MCF 10A (cell line): ENCODE measurements at regions of chr1 and their contacts with region 1.

Region 1: DNA sequence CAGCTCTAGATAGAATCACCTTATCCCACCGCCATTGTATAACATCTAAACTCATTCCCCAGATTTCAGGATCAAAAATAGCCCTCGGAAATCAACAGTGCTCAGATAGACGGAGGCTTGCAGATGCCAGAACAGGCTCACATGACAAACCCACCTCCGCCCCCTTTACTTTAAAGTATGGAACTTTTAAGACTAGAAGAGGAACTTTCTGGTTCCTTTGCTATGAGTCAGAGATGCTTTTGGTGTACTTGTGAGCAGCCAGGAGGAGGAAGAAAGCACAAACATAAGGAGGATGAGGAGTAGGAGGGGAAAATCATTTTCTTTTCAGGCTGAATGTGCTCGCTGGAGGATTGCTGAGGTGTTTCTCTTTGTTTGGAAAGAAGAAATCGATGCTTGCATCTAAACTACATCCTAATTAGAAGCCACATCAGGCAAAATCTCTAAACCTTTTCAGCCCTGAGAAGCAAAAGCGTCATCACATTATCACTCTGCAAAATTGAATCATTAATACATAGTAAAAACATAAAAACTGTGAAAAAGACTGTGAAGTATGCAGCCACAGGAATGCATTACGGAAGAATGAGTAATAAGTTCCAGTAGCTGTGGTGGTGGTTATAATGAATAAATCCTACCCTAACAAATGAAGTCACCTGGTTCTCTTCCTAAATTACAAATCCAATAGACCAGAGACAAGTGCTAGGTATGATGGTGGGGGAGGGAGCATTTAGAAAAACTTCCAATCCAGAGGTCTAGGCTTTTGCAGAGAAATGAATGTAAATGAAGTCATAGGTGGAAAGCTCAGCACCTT is 251.3 kb downstream of the KCNH1 start:
- DNase-seq: peak; percentile 87
- H3K4me3 Mint-ChIP-seq: peak overlapping the region; percentile 57
- H3K27ac Mint-ChIP-seq: peak overlapping the region; percentile 46
- H3K4me1 Mint-ChIP-seq: peaks cover 31% of the 10 kb centered on the region
- H3K27me3 Mint-ChIP-seq: no peaks in the 10 kb centered on the region
- CTCF ChIP-seq: no peak

Region 2: DNA sequence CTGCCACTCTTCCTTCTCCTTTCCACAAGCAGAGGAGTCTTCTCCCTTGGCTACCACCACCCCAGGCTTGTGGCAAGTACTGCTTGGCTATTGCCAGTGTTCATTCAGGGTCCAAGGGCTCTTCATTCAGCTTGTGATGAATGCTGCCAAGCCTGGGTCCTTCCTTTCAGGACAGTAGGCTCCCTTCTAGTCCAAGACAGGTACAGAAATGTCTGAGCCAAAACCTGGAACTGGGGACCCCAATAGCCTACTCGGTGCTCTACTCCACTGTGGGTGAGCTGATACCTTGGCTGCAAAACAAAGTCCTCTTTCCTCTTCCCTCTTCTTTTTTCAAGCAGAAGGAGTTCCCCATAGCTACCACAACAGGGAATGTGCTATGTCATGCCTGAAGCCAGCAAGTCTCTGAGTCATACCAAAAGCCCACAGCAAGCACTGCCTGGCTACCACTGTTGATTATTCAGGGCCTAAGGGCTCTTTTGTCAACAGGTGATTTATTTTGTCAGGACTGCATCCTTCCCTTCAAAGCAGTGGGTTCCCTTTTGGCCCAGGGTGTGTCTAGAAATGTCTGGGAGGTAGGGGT is 285.0 kb before region 1 on chr1:
- CTCF ChIA-PET with region 1: no interaction called
- POLR2A ChIA-PET with region 1: interaction called, 3 read pairs
- intact Hi-C with region 1: loop called (anchors 1 kb)
- DNase-seq: peak; percentile 94
- H3K4me3 Mint-ChIP-seq: no peak overlapping the region
- H3K27ac Mint-ChIP-seq: peak overlapping the region; percentile 98
- H3K4me1 Mint-ChIP-seq: peaks cover 19% of the 10 kb centered on the region
- H3K27me3 Mint-ChIP-seq: no peaks in the 10 kb centered on the region
- CTCF ChIP-seq: no peak

Region 3: DNA sequence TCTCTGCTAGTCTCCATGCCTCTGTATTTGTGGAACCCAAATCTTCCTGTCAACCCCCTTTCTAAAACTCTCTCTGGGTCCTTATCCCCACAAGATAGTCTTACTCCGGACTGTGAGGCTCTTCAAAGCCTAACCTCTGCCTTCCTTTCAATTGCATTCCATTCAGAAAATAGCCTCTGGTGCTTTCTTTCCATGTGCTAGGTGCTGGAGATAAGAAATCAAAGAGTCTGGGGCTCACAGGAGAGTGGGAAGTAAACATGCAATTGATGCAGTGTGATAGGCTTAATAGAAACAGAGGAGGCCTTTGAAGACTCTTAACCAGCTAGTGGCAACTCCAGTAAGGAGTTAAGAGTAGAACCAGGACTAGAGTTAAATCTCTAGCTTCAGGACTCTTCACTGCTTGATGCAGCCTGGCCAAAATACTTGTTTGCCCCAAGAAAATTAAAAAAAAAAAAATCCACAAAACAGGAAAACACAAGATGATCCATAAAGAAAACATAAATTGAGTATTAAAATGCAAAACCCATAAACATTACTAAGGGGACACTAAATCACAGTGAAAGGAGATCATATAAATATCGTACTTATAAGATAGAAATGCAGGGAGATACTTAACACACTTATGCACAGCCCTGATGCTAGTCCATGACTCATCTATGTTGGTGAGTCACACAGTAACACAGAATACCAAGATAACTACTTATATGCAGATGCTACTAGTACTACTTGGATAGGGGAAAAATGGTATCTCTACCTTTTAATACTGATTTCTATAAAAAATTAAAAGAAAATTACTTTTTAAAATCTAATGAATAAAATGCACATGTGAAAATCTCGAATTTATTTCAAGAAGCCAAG is 90.1 kb before region 1 on chr1:
- CTCF ChIA-PET with region 1: no interaction called
- POLR2A ChIA-PET with region 1: no interaction called
- intact Hi-C with region 1: loop called (anchors 2 kb)
- DNase-seq: peak; percentile 84
- H3K4me3 Mint-ChIP-seq: no peak overlapping the region
- H3K27ac Mint-ChIP-seq: no peak overlapping the region
- H3K4me1 Mint-ChIP-seq: peaks cover 7% of the 10 kb centered on the region
- H3K27me3 Mint-ChIP-seq: peaks cover 28% of the 10 kb centered on the region
- CTCF ChIP-seq: no peak

Region 4: DNA sequence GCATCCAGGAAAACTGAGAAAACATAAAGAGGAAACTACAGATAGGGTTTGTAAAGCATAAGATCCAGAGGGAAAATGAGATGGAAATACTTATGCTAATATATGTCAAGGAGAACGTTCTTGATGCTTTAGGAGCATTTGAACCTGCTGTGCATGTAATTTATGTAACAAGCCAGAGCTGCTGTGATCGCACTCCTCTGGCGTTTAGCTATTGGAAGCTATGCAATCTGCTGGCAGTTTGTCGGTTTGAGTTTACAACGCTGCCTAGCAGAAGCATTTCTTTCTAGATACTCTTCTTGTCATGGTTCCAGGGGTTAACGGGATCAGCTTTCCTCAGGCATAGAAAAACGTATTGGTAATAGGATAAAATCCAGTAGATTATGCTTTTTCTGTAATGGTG is 68.7 kb after region 1 on chr1:
- CTCF ChIA-PET with region 1: interaction called, 3 read pairs
- POLR2A ChIA-PET with region 1: no interaction called
- intact Hi-C with region 1: loop called (anchors 2 kb)
- DNase-seq: no peak
- H3K4me3 Mint-ChIP-seq: no peak overlapping the region
- H3K27ac Mint-ChIP-seq: no peak overlapping the region
- H3K4me1 Mint-ChIP-seq: no peaks in the 10 kb centered on the region
- H3K27me3 Mint-ChIP-seq: no peaks in the 10 kb centered on the region
- CTCF ChIP-seq: no peak

Region 5: DNA sequence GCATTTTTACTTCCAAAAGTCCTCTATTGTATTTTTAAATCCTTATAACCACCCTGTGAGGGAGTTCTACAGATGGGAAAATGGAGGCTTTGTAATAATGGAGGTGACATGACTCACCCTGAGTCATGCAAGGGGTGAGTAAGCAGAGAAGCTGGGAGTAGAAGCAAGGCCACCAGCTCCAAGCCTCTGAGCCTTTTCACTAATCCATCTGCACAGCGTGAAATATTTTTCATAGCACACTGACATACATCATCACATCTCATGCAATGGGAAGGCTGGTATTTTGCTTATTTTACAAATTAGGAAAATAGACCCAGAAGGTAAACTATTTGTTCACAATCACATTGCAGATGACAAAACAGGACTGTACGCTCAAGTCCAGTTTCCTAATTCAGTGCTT is 154.5 kb after region 1 on chr1:
- CTCF ChIA-PET with region 1: no interaction called
- POLR2A ChIA-PET with region 1: no interaction called
- intact Hi-C with region 1: loop called (anchors 2 kb)
- DNase-seq: peak; percentile 99
- H3K4me3 Mint-ChIP-seq: no peak overlapping the region
- H3K27ac Mint-ChIP-seq: peak overlapping the region; percentile 56
- H3K4me1 Mint-ChIP-seq: peaks cover 19% of the 10 kb centered on the region
- H3K27me3 Mint-ChIP-seq: no peaks in the 10 kb centered on the region
- CTCF ChIP-seq: no peak